HEK293 (cell line): ENCODE measurements at regions of chr17 and their contacts with region 1.

Region 1: GRCh38 chr17:7314719-7315569 is at the start of gene GPS2:
- H3K4me3 ChIP-seq: peak within 1 kb of the TSS; percentile 87
- H3K27ac ChIP-seq: peak within 1 kb of the TSS; percentile 98
- H3K4me1 ChIP-seq: peaks cover 11% of the 10 kb centered on the region
- CTCF ChIP-seq: no peak; the same call in 1 of the 2 replicates

Region 2: GRCh38 chr17:7219812-7220581 is 94.9 kb before region 1 on chr17 and contains the starts of genes ACADVL and DLG4:
- CTCF ChIA-PET with region 1: interaction called, 6 read pairs
- POLR2A ChIA-PET with region 1: interaction called, 15 read pairs
- H3K4me3 ChIP-seq: peak within 1 kb of the TSS; percentile 83
- H3K27ac ChIP-seq: peak within 1 kb of the TSS; percentile 83; the same call in 1 of the 2 replicates
- H3K4me1 ChIP-seq: peaks cover 7% of the 10 kb centered on the region
- CTCF ChIP-seq: no peak

Region 3: GRCh38 chr17:7239091-7240027 is 75.6 kb before region 1 on chr17 and contains the start of gene PHF23:
- CTCF ChIA-PET with region 1: no interaction called
- POLR2A ChIA-PET with region 1: interaction called, 14 read pairs
- H3K4me3 ChIP-seq: peak within 1 kb of the TSS; percentile 90
- H3K27ac ChIP-seq: peak within 1 kb of the TSS; percentile 89
- H3K4me1 ChIP-seq: peaks cover 13% of the 10 kb centered on the region
- CTCF ChIP-seq: peak; percentile 30; the same call in 1 of the 2 replicates

Region 4: GRCh38 chr17:7280519-7281429 is 34.2 kb before region 1 on chr17:
- CTCF ChIA-PET with region 1: interaction called, 6 read pairs
- POLR2A ChIA-PET with region 1: interaction called, 11 read pairs
- H3K4me3 ChIP-seq: peak overlapping the region; percentile 32
- H3K27ac ChIP-seq: no peak overlapping the region
- H3K4me1 ChIP-seq: peaks cover 9% of the 10 kb centered on the region
- CTCF ChIP-seq: peak; percentile 99

Region 5: DNA sequence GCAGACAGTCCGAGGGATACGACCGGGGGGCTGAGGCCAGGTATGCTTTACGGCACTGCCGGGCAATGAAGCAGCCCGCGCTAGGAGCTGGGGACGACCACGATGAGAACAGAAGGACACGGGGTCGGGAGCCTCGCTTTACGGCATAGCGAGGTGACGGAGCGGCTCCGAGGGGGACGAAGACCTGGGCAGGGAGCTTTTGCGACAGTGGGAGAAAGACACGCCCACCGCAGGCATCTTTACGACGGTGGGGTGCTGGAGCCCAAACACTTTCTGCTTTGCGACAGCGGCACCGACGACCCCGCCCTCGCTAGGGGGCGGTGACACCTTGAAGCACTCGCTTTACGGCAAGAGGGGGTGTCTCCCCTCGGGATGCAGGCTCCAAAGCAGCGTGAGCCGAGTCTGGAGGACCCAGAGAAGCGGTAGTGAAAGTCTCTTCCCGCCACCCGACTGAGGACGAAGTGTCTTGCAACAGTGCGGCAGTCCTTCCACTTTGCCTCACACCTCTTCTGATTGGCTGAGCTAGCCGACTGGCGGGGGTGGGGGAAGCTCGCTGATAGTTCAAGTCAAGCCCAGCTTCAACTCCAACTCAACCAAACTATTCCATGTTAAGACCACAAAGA is 14.5 kb after region 1 on chr17:
- CTCF ChIA-PET with region 1: interaction called, 7 read pairs
- POLR2A ChIA-PET with region 1: interaction called, 42 read pairs
- H3K4me3 ChIP-seq: peak overlapping the region; percentile 64
- H3K27ac ChIP-seq: peak overlapping the region; percentile 86
- H3K4me1 ChIP-seq: peaks cover 9% of the 10 kb centered on the region
- CTCF ChIP-seq: no peak